Adrenal gland (tissue), 19 donors: ENCODE measurements at regions of chr1 and their contacts with region 1.

Region 1: GRCh38 chr1:113835642-113836307 is 23.5 kb upstream of the RSBN1 start:
- DNase-seq: peak in 1 of 7 donors; percentile 23
- H3K4me3 ChIP-seq: peak overlapping the region in 1 of 4 donors; percentile 7
- H3K27ac ChIP-seq: no peak overlapping the region
- H3K4me1 ChIP-seq: peaks cover 0 to 4% of the 10 kb centered on the region in 2 donors
- H3K27me3 ChIP-seq: no peaks in the 10 kb centered on the region
- CTCF ChIP-seq: peak; percentile 42 to 75 (median 64)
- POLR2A ChIP-seq: no peak

Region 2: DNA sequence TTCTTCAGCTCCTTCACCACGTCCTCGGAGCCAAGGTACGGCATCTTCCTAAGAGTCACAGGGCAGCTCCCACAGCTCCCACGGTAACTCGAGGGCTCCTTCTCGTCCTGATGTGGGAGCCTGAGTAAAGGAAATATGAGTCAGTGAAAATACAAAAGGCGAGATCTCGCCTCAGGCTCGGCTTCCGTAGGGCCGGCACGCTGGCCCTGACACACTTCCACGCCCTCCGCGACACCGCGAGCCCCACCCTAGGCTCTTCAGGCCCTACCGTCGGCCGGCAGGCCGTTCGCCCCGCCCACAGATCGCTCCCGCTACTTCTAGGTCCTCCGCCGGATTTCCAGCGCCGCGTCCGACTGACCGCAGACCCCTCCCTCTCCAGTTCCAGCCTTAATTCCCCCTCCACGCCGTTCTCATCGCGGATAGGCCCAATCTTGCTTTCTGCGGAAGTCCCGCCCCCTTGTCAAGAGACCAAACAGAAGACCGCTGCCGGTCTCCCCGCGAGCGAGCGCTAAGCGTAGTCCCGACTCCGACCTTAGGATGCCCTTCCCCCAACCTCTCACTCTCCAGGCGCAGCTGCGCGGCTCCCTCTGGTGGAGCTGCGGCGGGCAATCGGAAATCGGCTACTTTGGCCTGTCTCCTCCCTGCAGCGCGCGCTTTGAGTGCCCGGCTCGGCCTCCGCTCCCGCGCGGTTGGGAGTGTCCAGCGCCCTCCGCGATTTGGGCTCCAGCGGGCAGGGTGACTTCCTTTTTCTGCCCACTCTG is 69.1 kb after region 1 on chr1 and contains the starts of genes AP4B1 and DCLRE1B:
- intact Hi-C with region 1: loop called in 1 of 2 experiments (anchors 5 kb)
- DNase-seq: peak; percentile 98 to 100 (median 99)
- H3K4me3 ChIP-seq: peak within 1 kb of the TSS; percentile 57 to 92 (median 68)
- H3K27ac ChIP-seq: peak within 1 kb of the TSS; percentile 37 to 96 (median 88)
- H3K4me1 ChIP-seq: peaks cover 5 to 23% of the 10 kb centered on the region in 2 donors
- H3K27me3 ChIP-seq: no peaks in the 10 kb centered on the region
- CTCF ChIP-seq: peak; percentile 43 to 90 (median 83)
- POLR2A ChIP-seq: peak; percentile 50 to 74
- total RNA-seq, gene AP4B1: 9.8 to 24.7 (median 14.2) TPM
- total RNA-seq, gene DCLRE1B: 2.9 to 6.1 (median 4.4) TPM

Region 3: DNA sequence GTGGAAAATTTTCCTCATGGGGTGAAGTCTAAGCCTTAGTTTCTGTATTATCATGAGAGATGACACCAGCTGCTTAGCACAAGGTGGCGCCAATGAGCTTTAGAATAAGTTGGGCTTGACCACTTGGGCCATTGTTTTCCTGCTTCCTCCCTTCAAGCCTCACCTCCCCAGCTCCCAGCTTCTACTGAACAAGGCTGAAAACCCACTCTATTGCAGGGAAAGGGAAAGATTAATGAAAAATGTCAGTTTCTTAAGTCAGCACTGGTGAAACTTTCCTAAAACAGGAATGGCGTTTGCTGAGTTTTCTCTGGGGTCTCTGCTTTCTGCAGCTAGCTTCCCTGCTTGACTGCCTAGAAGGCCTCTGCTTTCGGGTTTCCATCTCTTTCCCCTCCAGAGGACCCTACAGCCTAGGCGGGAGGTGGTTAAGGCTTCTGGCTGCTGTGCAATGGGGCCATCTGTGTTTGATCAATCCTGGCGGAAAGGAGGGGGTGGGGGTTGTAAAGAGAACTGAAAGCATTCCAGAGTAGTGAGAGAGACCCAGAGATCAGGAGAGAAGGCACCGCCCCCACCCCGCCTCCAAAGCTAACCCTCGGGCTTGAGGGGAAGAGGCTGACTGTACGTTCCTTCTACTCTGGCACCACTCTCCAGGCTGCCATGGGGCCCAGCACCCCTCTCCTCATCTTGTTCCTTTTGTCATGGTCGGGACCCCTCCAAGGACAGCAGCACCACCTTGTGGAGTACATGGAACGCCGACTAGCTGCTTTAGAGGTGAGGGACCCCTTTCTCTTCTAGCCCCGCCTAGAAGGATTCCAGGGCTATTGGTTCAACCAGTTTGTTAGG is 143.3 kb after region 1 on chr1 and contains the start of gene OLFML3:
- intact Hi-C with region 1: loop called in 1 of 2 experiments (anchors 10 kb)
- DNase-seq: peak; percentile 80 to 96 (median 86)
- H3K4me3 ChIP-seq: peak within 1 kb of the TSS in 1 of 4 donors; percentile 38
- H3K27ac ChIP-seq: peak within 1 kb of the TSS in 2 of 5 donors; percentile 50 to 53
- H3K4me1 ChIP-seq: peaks cover 11 to 30% of the 10 kb centered on the region in 2 donors
- H3K27me3 ChIP-seq: no peaks in the 10 kb centered on the region
- CTCF ChIP-seq: peak; percentile 43 to 84 (median 74)
- POLR2A ChIP-seq: no peak
- total RNA-seq, gene OLFML3: 13.6 to 99.6 (median 35.3) TPM

Region 4: DNA sequence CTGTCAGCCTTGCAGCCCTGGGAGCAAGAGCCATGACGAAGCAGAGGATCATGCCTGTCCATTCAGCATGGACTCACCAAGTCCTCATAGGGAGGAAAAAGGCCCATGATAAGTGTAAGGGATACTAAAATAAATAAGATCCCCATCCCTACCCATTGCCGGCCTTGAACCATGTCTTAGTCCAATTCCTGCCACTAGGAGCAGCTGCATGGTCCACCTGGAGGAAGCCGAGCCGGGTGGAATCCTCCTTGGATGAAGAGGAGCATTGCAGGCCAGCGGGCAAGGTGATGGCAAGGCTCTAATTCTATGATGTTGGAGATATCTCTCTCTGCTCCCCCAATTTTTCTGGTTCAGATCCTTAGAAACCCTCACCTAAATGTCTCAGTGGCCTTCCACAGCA is 356.6 kb after region 1 on chr1:
- intact Hi-C with region 1: no loop called
- DNase-seq: no peak
- H3K4me3 ChIP-seq: no peak overlapping the region
- H3K27ac ChIP-seq: no peak overlapping the region
- H3K4me1 ChIP-seq: no peaks in the 10 kb centered on the region
- H3K27me3 ChIP-seq: no peaks in the 10 kb centered on the region
- CTCF ChIP-seq: no peak
- POLR2A ChIP-seq: no peak

Region 5: DNA sequence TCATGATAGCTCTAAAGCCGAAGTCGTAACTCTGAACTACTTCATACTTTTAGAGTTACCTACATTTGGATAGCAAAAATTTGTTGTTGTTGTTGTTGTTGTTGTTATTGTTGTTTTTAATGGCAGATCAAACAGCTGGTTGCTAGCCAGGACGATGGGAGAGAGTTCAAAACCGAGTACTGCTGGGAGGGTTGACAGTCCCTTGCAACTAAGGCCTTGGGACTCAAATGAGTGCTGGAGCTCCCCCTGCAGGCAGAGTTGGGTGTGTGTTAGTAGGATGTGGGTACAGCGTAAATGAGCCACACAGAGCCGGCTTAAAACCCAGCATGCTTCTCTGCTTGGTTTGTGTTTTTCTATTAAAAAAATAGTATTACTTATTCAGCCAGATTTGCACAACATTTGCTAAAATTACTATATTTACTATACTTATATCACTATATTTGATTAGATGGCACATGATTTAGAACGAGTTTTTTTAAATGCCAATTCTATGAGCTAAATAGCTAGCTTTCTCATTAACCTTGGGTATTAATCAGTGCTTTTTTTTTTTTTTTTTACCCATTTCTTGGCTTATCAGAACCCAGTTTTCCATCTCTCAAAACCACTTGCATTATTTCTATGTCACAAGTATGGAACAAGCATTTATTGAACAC is 447.1 kb after region 1 on chr1:
- intact Hi-C with region 1: loop called in 1 of 2 experiments (anchors 10 kb)
- DNase-seq: peak; percentile 84 to 97 (median 92)
- H3K4me3 ChIP-seq: no peak overlapping the region
- H3K27ac ChIP-seq: no peak overlapping the region
- H3K4me1 ChIP-seq: no peaks in the 10 kb centered on the region
- H3K27me3 ChIP-seq: no peaks in the 10 kb centered on the region
- CTCF ChIP-seq: peak; percentile 76 to 91 (median 88)
- POLR2A ChIP-seq: no peak

Region 6: GRCh38 chr1:115052454-115053083 is 1216.8 kb after region 1 on chr1:
- intact Hi-C with region 1: no loop called
- DNase-seq: peak; percentile 35 to 86 (median 67)
- H3K4me3 ChIP-seq: no peak overlapping the region
- H3K27ac ChIP-seq: no peak overlapping the region
- H3K4me1 ChIP-seq: no peaks in the 10 kb centered on the region
- H3K27me3 ChIP-seq: no peaks in the 10 kb centered on the region
- CTCF ChIP-seq: peak; percentile 60 to 81 (median 72)
- POLR2A ChIP-seq: no peak